ENCODE measurements at regions of chr1 and their contacts with region 1.

Region 1: GRCh38 chr1:235045034-235045720 is 83.5 kb downstream of the TOMM20 start:
- DNase-seq: no peak
- H3K4me3 ChIP-seq: no peak overlapping the region
- H3K27ac ChIP-seq: no peak overlapping the region
- H3K4me1 ChIP-seq: peaks cover 22% of the 10 kb centered on the region
- H3K27me3 ChIP-seq: no peaks in the 10 kb centered on the region
- CTCF ChIP-seq: no peak
- POLR2A ChIP-seq: no peak

Region 2: GRCh38 chr1:234997201-234997895 is 47.8 kb before region 1 on chr1:
- intact Hi-C with region 1: loop called (anchors 5 kb)
- DNase-seq: peak in 1 of 2 donors; percentile 98
- H3K4me3 ChIP-seq: peak overlapping the region in 1 of 2 donors; percentile 15
- H3K27ac ChIP-seq: peak overlapping the region; percentile 87
- H3K4me1 ChIP-seq: peaks cover 28% of the 10 kb centered on the region
- H3K27me3 ChIP-seq: no peaks in the 10 kb centered on the region
- CTCF ChIP-seq: no peak
- POLR2A ChIP-seq: peak in 1 of 2 donors; percentile 25

Region 3: GRCh38 chr1:235831148-235831547 is 786.0 kb after region 1 on chr1:
- intact Hi-C with region 1: no loop called
- DNase-seq: no peak
- H3K4me3 ChIP-seq: no peak overlapping the region
- H3K27ac ChIP-seq: no peak overlapping the region
- H3K4me1 ChIP-seq: peaks cover 17% of the 10 kb centered on the region
- H3K27me3 ChIP-seq: no peaks in the 10 kb centered on the region
- CTCF ChIP-seq: no peak
- POLR2A ChIP-seq: no peak

Measured in vagina (tissue), 2 donors.